ENCODE measurements at regions of chr10 and their contacts with region 1.

Region 1: GRCh38 chr10:43671656-43672531 is 23.2 kb upstream of the ZNF32 start:
- DNase-seq: no peak

Region 2: DNA sequence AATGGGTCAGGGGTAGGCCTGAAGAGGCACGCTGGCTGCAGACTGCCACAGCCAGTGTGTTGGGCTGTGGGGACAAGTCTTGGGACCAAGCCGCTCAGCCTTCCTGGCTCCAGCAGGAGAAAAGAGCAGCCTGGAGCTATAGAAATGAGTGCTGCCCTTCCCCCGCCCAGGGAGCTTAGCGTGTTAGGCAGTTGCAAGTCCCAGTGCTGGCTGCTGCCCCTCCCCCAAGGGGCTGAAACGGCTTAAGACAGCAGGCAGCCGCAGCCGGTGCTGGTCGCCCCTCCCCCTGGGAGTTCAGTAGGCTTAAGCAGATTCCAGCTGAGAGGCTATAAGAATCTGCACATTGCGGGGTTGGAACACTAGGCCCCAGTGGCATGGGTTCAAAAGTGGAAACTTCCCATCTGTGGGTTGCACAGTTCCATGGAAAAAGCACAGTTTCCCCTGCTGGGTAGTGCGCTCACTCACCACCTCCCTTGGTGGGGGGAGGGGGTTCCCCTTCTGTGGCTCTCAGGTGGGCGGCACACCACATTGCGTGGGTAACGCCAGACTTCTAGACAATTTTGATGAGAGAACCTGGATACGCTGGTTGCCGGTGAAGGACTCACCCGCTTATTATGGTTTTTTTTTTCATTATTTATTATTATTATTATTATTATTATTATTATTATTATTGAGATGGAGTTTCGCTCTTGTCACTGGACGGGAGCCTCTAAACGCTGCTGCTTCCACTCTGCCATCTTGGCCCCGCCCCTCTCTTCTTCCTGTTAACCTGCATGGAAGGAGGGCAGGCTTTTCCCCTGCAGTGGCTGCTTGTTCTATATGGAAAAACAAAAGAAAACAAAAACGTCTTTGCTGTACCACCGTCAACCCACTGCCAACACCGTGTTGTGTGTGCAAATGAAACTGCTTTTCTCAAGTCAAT is 561.9 kb after region 1 on chr10:
- intact Hi-C with region 1: no loop called
- DNase-seq: no peak

Region 3: GRCh38 chr10:44310762-44311562 is 639.1 kb after region 1 on chr10:
- intact Hi-C with region 1: loop called (anchors 5 kb)
- DNase-seq: peak; percentile 93